Keratinocyte (primary cell): ENCODE measurements at regions of chr4 and their contacts with region 1.

Region 1: GRCh38 chr4:88523325-88524129 is at the start of gene PYURF:
- DNase-seq: no peak
- H3K4me3 ChIP-seq: peak within 1 kb of the TSS; percentile 91 to 96 (median 96)
- H3K27ac ChIP-seq: peak within 1 kb of the TSS; percentile 95
- H3K4me1 ChIP-seq: peaks cover 23% of the 10 kb centered on the region
- H3K27me3 ChIP-seq: no peaks in the 10 kb centered on the region
- CTCF ChIP-seq: no peak
- polyA plus RNA-seq, gene PYURF: 55.4 to 95.6 TPM (median 71.5 TPM) in 3 replicates

Region 2: GRCh38 chr4:88244816-88245579 is 278.5 kb before region 1 on chr4:
- dilution Hi-C with region 1: loop called (anchors 25 kb)
- DNase-seq: no peak
- H3K4me3 ChIP-seq: no peak overlapping the region
- H3K27ac ChIP-seq: no peak overlapping the region
- H3K4me1 ChIP-seq: no peaks in the 10 kb centered on the region
- H3K27me3 ChIP-seq: no peaks in the 10 kb centered on the region
- CTCF ChIP-seq: no peak

Region 3: GRCh38 chr4:88659055-88659889 is 135.7 kb after region 1 on chr4:
- dilution Hi-C with region 1: no loop called
- DNase-seq: peak; percentile 41
- H3K4me3 ChIP-seq: peak overlapping the region in 2 of 3 experiments; percentile 7 to 22
- H3K27ac ChIP-seq: peak overlapping the region; percentile 74
- H3K4me1 ChIP-seq: peaks cover 15% of the 10 kb centered on the region
- H3K27me3 ChIP-seq: no peaks in the 10 kb centered on the region
- CTCF ChIP-seq: peak; percentile 81 to 97 (median 92)